PC-9 (cell line): ENCODE measurements at regions of chr13 and their contacts with region 1.

Region 1: GRCh38 chr13:106100171-106100919 is 435.1 kb downstream of the EFNB2 start:
- DNase-seq: peak; percentile 85 to 86
- H3K4me3 ChIP-seq: no peak overlapping the region
- H3K27ac ChIP-seq: peak overlapping the region; percentile 58
- H3K4me1 ChIP-seq: peaks cover 73% of the 10 kb centered on the region
- H3K27me3 ChIP-seq: no peaks in the 10 kb centered on the region
- CTCF ChIP-seq: no peak

Region 2: DNA sequence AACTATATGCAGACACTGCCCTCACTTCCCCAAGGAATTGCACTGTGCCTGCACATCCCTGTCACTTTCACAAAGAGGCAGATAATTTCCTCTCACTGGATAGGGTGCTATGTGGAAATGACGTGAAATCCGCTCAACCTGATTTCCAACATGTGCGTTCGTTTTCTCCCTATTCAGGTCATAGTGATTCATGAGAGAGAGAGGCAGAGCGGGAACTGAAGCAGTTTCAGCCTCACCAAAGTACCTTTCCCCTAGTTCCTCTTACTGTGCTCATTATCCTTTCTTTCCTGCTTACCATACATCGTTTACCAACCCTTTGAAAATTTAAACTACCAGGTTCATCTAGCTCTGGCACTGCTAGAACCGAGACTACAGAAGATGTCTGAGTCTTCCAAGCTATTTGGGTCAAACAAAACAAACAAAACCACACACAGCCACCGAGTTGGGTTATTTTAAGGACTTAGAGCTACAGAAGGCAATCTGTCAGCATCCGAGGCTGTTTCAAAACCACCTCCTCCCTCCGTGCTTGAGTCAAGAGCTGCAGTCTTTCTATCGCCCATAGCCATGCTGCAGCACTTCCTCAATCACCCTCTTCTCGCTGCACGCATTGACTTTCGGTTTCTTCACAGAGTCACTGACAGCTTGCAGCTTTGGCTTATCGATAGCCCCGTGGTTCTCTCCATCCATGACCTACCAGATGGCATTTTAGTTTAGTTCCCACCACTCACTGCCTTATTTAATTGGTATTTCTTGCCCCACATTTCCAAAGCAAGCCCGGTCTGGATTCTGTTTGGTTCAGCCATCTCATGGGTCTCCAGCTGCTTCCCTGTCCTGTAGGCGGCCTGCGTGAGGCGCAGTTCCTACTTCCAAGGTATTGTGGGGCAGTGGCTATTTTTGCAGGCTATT is 960.7 kb before region 1 on chr13:
- CTCF ChIA-PET with region 1: no interaction called
- POLR2A ChIA-PET with region 1: no interaction called
- intact Hi-C with region 1: loop called (anchors 5 kb)
- DNase-seq: peak; percentile 53 to 77
- H3K4me3 ChIP-seq: peak overlapping the region; percentile 67
- H3K27ac ChIP-seq: peak overlapping the region; percentile 77
- H3K4me1 ChIP-seq: peaks cover 8% of the 10 kb centered on the region
- H3K27me3 ChIP-seq: no peaks in the 10 kb centered on the region
- CTCF ChIP-seq: peak; percentile 65; the same call in 1 of the 2 replicates

Region 3: GRCh38 chr13:105773863-105774538 is 326.3 kb before region 1 on chr13:
- CTCF ChIA-PET with region 1: no interaction called
- POLR2A ChIA-PET with region 1: no interaction called
- intact Hi-C with region 1: loop called (anchors 5 kb)
- DNase-seq: peak; percentile 76 to 99
- H3K4me3 ChIP-seq: peak overlapping the region; percentile 43
- H3K27ac ChIP-seq: peak overlapping the region; percentile 89
- H3K4me1 ChIP-seq: peaks cover 36% of the 10 kb centered on the region
- H3K27me3 ChIP-seq: no peaks in the 10 kb centered on the region
- CTCF ChIP-seq: no peak

Region 4: DNA sequence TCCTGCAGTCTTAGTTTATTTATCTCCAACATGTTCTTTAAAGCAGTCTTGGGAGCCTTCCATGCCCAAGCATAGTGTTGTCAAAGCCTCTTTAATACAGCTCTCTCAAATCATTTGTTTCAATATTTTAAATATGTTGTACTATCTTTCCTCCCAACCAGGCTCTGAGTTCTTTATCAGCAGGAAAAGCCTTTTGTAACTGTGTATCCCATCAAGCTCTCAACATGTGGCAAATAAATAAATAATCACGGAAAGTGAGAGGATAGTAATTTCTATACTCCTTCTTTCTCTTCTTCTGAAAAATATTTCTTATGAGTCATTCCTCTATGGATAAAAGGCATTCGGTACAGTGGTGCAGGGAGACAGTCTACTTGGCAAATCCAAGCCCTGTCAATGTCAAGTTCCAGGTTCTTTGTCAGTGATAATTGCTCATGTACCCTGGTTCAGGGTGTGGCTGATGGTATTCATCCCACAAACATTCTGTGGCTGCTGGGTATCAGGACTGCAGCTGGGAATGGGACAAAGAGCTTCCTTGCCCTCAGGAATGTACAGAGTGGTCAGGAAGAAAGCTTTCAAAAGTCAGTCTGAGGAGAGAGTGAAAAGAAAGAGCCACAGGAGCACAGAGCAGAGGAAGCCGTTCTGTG is 50.8 kb after region 1 on chr13:
- CTCF ChIA-PET with region 1: no interaction called
- POLR2A ChIA-PET with region 1: no interaction called
- intact Hi-C with region 1: loop called (anchors 1 kb)
- DNase-seq: peak; percentile 79 to 99
- H3K4me3 ChIP-seq: no peak overlapping the region
- H3K27ac ChIP-seq: peak overlapping the region; percentile 94
- H3K4me1 ChIP-seq: peaks cover 48% of the 10 kb centered on the region
- H3K27me3 ChIP-seq: no peaks in the 10 kb centered on the region
- CTCF ChIP-seq: no peak

Region 5: GRCh38 chr13:106349080-106349931 is 249.0 kb after region 1 on chr13:
- CTCF ChIA-PET with region 1: no interaction called
- POLR2A ChIA-PET with region 1: interaction called, 3 read pairs
- intact Hi-C with region 1: loop called (anchors 2 kb)
- DNase-seq: peak; percentile 59 to 91
- H3K4me3 ChIP-seq: peak overlapping the region; percentile 52
- H3K27ac ChIP-seq: peak overlapping the region; percentile 84
- H3K4me1 ChIP-seq: peaks cover 40% of the 10 kb centered on the region
- H3K27me3 ChIP-seq: no peaks in the 10 kb centered on the region
- CTCF ChIP-seq: no peak

Region 6: DNA sequence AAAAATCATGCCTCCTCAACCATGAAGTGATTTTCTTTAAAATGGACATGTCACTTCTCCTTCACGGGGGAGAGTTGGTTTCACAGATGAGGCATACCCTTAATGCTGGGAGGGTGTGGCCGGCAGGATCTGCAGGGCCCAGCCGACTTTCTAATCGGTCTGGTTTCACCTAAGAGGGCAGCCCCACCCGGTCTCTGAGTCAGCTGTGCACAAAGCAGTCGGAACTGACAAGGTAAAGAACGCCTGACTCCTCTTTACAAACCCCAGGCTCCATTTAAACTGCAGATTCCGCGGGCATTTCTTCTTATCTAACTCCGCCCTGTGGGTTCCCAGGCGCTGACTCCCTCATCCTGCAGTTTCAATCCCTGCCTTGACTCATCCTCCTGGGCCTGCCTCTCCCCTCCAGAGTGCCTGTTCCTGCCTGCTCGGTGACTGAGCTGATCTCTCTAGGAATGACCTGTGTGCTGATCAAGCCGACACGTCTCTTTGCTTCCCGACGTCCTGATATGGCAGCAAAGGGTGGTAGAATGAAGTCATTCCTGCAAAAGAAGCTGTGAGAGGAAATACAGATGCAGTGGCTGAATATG is 371.7 kb after region 1 on chr13:
- CTCF ChIA-PET with region 1: no interaction called
- POLR2A ChIA-PET with region 1: interaction called, 3 read pairs
- intact Hi-C with region 1: loop called (anchors 2 kb)
- DNase-seq: peak; percentile 88 to 99
- H3K4me3 ChIP-seq: peak overlapping the region; percentile 41; the same call in 1 of the 2 replicates
- H3K27ac ChIP-seq: peak overlapping the region; percentile 91
- H3K4me1 ChIP-seq: peaks cover 31% of the 10 kb centered on the region
- H3K27me3 ChIP-seq: no peaks in the 10 kb centered on the region
- CTCF ChIP-seq: no peak